ENCODE measurements at regions of chr5 and their contacts with region 1.

Region 1: GRCh38 chr5:114678778-114679177 is 316.9 kb downstream of the KCNN2 start:
- DNase-seq: no peak
- H3K4me3 ChIP-seq: no peak overlapping the region
- CTCF ChIP-seq: no peak

Region 2: GRCh38 chr5:114612406-114612805 is 66.4 kb before region 1 on chr5:
- in situ Hi-C with region 1: no loop called
- DNase-seq: no peak
- H3K4me3 ChIP-seq: no peak overlapping the region
- CTCF ChIP-seq: no peak

Region 3: GRCh38 chr5:114649878-114650277 is 28.9 kb before region 1 on chr5:
- in situ Hi-C with region 1: loop called (anchors 5 kb)
- DNase-seq: no peak
- H3K4me3 ChIP-seq: no peak overlapping the region
- CTCF ChIP-seq: no peak

Region 4: DNA sequence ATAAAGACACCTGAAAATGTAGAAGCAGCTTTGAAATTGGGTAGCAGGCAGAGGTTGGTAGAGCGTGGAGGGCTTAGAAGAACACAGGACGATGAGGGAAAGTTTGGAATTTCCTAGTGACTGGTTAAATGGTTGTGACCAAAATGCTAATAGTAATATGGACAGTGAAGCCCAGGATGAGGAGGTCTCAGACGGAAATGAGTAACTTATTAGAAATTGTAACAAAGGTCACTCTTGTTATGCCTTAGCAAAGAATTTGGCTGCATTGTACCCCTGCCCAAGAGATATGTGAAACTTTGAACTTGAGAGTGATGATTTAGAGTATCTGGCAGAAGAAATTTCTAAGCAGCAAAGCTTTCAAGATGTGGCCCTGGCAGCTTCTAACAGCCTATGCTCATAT is 65.6 kb after region 1 on chr5:
- in situ Hi-C with region 1: no loop called
- DNase-seq: no peak
- H3K4me3 ChIP-seq: no peak overlapping the region
- CTCF ChIP-seq: no peak

Measured in astrocyte of the cerebellum (primary cell).